ENCODE measurements at regions of chr22 and their contacts with region 1.

Region 1: GRCh38 chr22:38766076-38766777 is 10.4 kb upstream of the SUN2 start:
- DNase-seq: peak in 7 of 9 experiments; percentile 34 to 74 (median 55)
- ATAC-seq: peak; percentile 63
- H3K4me3 ChIP-seq: no peak overlapping the region
- H3K4me3 Mint-ChIP-seq: no peak overlapping the region
- H3K27ac ChIP-seq: no peak overlapping the region
- H3K27ac Mint-ChIP-seq: no peak overlapping the region
- H3K4me1 ChIP-seq: peaks cover 6% of the 10 kb centered on the region
- H3K4me1 Mint-ChIP-seq: peaks cover 11% of the 10 kb centered on the region
- H3K27me3 ChIP-seq: no peaks in the 10 kb centered on the region
- H3K27me3 Mint-ChIP-seq: no peaks in the 10 kb centered on the region
- CTCF ChIP-seq: peak; percentile 54

Region 2: GRCh38 chr22:38485783-38486182 is 280.4 kb before region 1 on chr22:
- CTCF ChIA-PET with region 1: no interaction called
- POLR2A ChIA-PET with region 1: no interaction called
- intact Hi-C with region 1: no loop called
- DNase-seq: no peak
- ATAC-seq: no peak
- H3K4me3 ChIP-seq: no peak overlapping the region
- H3K4me3 Mint-ChIP-seq: no peak overlapping the region
- H3K27ac ChIP-seq: no peak overlapping the region
- H3K27ac Mint-ChIP-seq: peak overlapping the region; percentile 73
- H3K4me1 ChIP-seq: peaks cover 16% of the 10 kb centered on the region
- H3K4me1 Mint-ChIP-seq: peaks cover 64% of the 10 kb centered on the region
- H3K27me3 ChIP-seq: no peaks in the 10 kb centered on the region
- H3K27me3 Mint-ChIP-seq: no peaks in the 10 kb centered on the region
- CTCF ChIP-seq: no peak

Region 3: GRCh38 chr22:38740754-38741153 is 25.5 kb before region 1 on chr22:
- CTCF ChIA-PET with region 1: interaction called, 125 read pairs
- POLR2A ChIA-PET with region 1: interaction called, 60 read pairs
- intact Hi-C with region 1: no loop called
- DNase-seq: no peak
- ATAC-seq: no peak
- H3K4me3 ChIP-seq: no peak overlapping the region
- H3K4me3 Mint-ChIP-seq: no peak overlapping the region
- H3K27ac ChIP-seq: peak overlapping the region in 1 of 2 experiments; percentile 60
- H3K27ac Mint-ChIP-seq: peak overlapping the region; percentile 82
- H3K4me1 ChIP-seq: peaks cover 87% of the 10 kb centered on the region
- H3K4me1 Mint-ChIP-seq: peaks cover 59% of the 10 kb centered on the region
- H3K27me3 ChIP-seq: no peaks in the 10 kb centered on the region
- H3K27me3 Mint-ChIP-seq: no peaks in the 10 kb centered on the region
- CTCF ChIP-seq: no peak

Region 4: DNA sequence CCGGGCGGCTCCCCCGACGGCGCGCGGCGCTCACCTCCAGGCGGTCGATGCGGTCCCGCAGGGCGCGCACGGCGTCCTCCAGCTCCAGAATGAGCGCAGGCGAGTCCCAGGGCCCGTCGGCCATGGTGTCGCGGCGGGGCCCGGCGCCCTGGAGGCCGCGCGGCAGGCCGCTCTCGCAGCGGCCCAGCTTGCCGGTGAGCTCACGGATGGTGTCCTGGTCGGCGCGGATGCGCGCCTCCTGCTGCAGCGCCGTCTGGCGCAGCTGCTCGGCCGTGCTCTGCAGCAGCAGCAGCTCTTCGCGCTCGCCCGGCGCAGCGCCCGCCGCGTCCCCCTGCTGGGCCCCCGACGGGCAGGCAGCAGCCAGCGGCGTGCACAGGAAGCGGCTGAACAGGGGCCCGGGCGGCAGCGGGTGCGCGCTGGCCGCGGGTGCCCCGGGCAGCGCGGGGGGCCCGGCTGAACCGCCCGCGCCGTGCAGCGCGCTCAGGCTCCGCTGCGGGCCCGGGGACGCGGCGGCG is 77.0 kb after region 1 on chr22:
- CTCF ChIA-PET with region 1: interaction called, 5 read pairs
- POLR2A ChIA-PET with region 1: no interaction called
- intact Hi-C with region 1: loop called in 1 of 2 experiments (anchors 2 kb)
- DNase-seq: peak; percentile 19 to 85 (median 54)
- ATAC-seq: peak; percentile 85
- H3K4me3 ChIP-seq: peak overlapping the region in 1 of 2 experiments; percentile 50
- H3K4me3 Mint-ChIP-seq: peak overlapping the region; percentile 29
- H3K27ac ChIP-seq: no peak overlapping the region
- H3K27ac Mint-ChIP-seq: no peak overlapping the region
- H3K4me1 ChIP-seq: peaks cover 19% of the 10 kb centered on the region
- H3K4me1 Mint-ChIP-seq: peaks cover 26% of the 10 kb centered on the region
- H3K27me3 ChIP-seq: no peaks in the 10 kb centered on the region
- H3K27me3 Mint-ChIP-seq: peaks cover 14% of the 10 kb centered on the region
- CTCF ChIP-seq: no peak

Measured in CD8-positive, alpha-beta T cell (primary cell).